ENCODE measurements at regions of chr2 and their contacts with region 1.

Region 1: DNA sequence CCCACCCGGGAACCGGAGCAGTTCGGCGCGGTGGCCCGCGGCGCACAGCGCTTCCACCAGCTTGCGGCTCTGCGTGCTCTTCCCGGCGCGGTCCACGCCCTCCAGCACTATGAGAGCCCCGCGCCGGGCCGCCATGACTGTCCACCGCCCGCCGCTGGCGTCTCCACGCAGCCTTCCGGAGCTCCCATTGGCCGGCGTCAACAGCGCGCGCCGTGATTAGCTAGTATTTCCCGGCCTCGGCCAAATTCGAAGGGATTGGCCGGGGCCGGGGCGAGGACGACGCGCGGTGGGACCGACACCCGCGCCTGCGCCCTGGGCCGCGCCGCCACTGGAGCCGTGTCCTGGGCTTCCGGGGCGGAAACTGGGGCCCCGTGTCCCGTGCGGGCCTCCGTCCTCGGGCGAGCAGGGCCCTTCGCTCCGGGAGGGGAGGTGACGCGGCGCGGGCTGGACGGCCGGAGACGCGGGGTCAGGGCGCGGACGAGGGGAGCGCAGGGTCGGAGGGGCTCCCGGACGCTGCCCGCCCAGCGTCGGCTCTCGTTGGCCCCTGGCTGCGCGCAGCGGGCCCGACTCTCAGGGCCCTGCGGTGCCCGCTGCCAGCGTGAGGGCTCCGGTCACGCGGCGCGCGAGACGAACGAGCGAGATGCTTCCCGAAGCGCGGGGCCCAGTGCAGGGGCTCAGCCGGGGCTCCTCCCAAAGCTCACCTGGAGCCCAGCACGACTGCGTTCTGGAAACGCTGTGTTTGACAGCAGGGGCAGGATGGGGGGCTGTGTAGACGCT is at the start of gene DTYMK:
- DNase-seq: peak; percentile 96
- H3K4me3 ChIP-seq: peak within 1 kb of the TSS; percentile 90 to 93 (median 92)
- H3K27ac ChIP-seq: peak within 1 kb of the TSS; percentile 75
- H3K4me1 ChIP-seq: peaks cover 13% of the 10 kb centered on the region
- H3K27me3 ChIP-seq: no peaks in the 10 kb centered on the region
- CTCF ChIP-seq: no peak
- POLR2A ChIP-seq: peak; percentile 91
- total RNA-seq, gene DTYMK: 91.9 and 104 TPM in 2 replicates

Region 2: DNA sequence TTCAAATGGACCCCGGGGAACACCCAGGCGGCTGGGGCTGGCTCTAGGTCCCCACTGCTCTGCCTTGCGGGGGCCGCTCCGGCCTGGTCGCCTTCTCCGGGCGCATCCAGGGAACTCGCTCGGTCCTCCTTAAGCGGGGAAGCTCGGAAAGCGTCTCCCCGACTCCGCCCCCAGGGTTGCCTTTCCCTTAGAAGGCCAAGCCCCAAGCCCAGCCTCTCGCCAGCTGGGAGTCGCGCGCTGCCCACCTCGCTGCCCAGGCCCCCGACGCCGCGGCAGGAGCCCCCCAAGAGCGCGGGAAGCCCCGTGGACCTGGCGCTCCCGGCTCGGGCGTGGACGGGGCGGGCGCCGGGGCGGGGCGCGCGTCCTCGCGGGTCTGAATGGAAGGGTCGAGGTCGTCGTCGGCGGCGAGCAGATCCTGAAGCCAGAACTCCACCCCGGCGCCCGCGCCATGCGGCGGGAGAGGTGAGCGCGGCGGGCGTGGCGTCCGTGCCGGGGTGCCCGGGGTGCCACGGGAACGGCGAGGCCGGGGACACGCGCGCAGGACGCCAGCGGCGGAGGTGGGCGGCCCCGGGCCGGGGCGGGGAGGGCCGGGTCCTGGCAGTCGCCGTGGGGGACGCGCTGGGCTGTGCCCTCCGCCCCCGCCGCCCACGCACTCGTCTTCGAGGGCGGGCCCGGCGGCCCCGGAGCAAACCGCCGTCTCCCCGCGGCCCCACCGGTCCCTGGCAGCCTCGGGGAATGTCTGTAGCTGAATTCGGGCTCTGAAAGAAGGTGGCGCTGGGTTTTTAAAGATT is 128.1 kb before region 1 on chr2 and contains the start of gene BOK:
- CTCF ChIA-PET with region 1: no interaction called
- POLR2A ChIA-PET with region 1: no interaction called
- dilution Hi-C with region 1: no loop called
- intact Hi-C with region 1: no loop called
- DNase-seq: peak; percentile 84
- H3K4me3 ChIP-seq: peak within 1 kb of the TSS; percentile 71 to 80 (median 72)
- H3K27ac ChIP-seq: peak within 1 kb of the TSS; percentile 25
- H3K4me1 ChIP-seq: peaks cover 30% of the 10 kb centered on the region
- H3K27me3 ChIP-seq: no peaks in the 10 kb centered on the region
- CTCF ChIP-seq: no peak
- POLR2A ChIP-seq: peak; percentile 68
- total RNA-seq, gene BOK: 52.4 and 76.0 TPM in 2 replicates

Region 3: GRCh38 chr2:241665727-241666440 is 21.0 kb before region 1 on chr2:
- CTCF ChIA-PET with region 1: interaction called, 5 read pairs
- POLR2A ChIA-PET with region 1: no interaction called
- dilution Hi-C with region 1: no loop called
- intact Hi-C with region 1: loop called (anchors 1 kb)
- DNase-seq: no peak
- H3K4me3 ChIP-seq: no peak overlapping the region
- H3K27ac ChIP-seq: peak overlapping the region; percentile 21
- H3K4me1 ChIP-seq: peaks cover 20% of the 10 kb centered on the region
- H3K27me3 ChIP-seq: no peaks in the 10 kb centered on the region
- CTCF ChIP-seq: no peak
- POLR2A ChIP-seq: no peak

Region 4: GRCh38 chr2:241702132-241703031 is 15.5 kb after region 1 on chr2:
- CTCF ChIA-PET with region 1: interaction called, 6 read pairs
- POLR2A ChIA-PET with region 1: interaction called, 6 read pairs
- dilution Hi-C with region 1: no loop called
- intact Hi-C with region 1: loop called (anchors 1 kb)
- DNase-seq: peak; percentile 82
- H3K4me3 ChIP-seq: peak overlapping the region; percentile 49 to 75 (median 64)
- H3K27ac ChIP-seq: peak overlapping the region; percentile 15
- H3K4me1 ChIP-seq: peaks cover 6% of the 10 kb centered on the region
- H3K27me3 ChIP-seq: no peaks in the 10 kb centered on the region
- CTCF ChIP-seq: peak; percentile 45 to 56
- POLR2A ChIP-seq: no peak

Region 5: DNA sequence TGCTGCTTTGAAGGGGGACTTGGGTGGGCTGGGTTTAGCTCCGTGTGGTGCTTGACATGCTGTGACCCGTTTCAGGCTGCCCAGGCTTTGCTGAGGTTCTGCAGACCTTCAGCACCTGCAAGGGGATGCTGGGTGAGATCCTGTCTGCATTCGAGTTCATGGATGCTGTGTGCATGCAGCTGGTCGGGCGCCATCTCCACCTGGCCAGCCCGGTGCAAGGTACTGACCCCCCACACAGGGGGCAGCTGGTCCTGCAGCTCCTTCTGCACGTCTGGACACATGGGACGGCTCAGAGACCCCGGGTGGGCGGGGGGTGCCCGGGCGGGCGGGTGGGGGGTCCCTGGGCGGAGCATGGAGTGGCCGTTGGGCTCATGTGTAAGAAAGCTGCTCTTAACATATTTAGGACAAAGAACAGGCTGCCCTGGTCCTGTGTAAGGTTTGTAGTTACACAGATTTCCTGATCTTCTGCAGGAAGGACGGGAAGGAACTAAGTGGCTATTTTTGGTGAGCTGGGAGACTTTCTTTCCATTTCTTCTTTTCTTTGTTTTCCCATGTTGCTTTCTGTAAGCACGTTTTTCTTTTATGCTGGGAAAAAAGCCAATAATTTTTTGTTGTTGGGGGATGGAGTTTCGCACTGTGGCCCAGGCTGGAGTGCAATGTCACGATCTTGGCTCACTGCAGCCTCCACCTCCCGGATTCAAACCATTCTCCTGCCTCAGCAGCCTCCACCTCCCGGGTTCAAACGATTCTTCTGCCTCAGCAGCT is 63.4 kb after region 1 on chr2:
- CTCF ChIA-PET with region 1: no interaction called
- POLR2A ChIA-PET with region 1: no interaction called
- dilution Hi-C with region 1: no loop called
- intact Hi-C with region 1: no loop called
- DNase-seq: peak; percentile 62
- H3K4me3 ChIP-seq: no peak overlapping the region
- H3K27ac ChIP-seq: no peak overlapping the region
- H3K4me1 ChIP-seq: no peaks in the 10 kb centered on the region
- H3K27me3 ChIP-seq: no peaks in the 10 kb centered on the region
- CTCF ChIP-seq: no peak
- POLR2A ChIP-seq: no peak